HEK293 (cell line): ENCODE measurements at regions of chr21 and their contacts with region 1.

Region 1: GRCh38 chr21:36854391-36854790 is 112.1 kb downstream of the HLCS start:
- H3K4me3 ChIP-seq: no peak overlapping the region
- H3K27ac ChIP-seq: no peak overlapping the region
- H3K4me1 ChIP-seq: no peaks in the 10 kb centered on the region; the same call in 1 of the 2 replicates
- CTCF ChIP-seq: no peak; the same call in none of the 2 replicates

Region 2: DNA sequence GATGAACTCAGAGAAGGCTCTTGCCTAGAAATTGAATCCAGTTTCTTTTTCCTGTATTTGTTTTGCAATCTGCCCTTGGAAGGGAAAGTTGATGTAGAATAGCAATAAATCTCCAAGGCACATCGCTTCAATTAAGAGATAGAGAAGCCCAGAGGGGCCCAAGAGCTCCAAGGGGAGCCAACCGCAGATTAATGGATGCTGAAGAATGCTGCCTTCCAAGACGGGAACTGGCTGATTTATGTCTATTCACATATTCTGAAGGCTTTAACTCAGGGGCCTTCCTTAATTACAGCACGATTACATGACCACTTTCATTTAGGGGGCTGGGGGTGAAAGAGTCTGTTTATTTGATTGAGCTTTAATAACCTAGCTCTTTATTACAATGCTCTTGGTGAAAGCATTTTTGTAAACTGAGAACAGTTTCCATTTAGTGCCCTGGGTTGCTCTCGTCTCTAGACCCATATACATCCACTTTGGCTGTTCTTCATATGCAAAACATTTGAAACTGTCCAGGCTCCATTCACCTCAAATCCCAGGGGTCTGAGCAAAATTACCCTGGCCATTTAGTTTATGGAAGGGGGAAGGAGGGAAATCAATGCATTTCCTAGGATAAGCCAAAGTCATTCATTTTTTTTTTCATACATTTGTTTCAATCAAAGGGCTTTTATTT is 287.0 kb before region 1 on chr21:
- CTCF ChIA-PET with region 1: no interaction called
- POLR2A ChIA-PET with region 1: no interaction called
- H3K4me3 ChIP-seq: no peak overlapping the region
- H3K27ac ChIP-seq: peak overlapping the region; percentile 89
- H3K4me1 ChIP-seq: peaks cover 28% of the 10 kb centered on the region
- CTCF ChIP-seq: no peak

Region 3: DNA sequence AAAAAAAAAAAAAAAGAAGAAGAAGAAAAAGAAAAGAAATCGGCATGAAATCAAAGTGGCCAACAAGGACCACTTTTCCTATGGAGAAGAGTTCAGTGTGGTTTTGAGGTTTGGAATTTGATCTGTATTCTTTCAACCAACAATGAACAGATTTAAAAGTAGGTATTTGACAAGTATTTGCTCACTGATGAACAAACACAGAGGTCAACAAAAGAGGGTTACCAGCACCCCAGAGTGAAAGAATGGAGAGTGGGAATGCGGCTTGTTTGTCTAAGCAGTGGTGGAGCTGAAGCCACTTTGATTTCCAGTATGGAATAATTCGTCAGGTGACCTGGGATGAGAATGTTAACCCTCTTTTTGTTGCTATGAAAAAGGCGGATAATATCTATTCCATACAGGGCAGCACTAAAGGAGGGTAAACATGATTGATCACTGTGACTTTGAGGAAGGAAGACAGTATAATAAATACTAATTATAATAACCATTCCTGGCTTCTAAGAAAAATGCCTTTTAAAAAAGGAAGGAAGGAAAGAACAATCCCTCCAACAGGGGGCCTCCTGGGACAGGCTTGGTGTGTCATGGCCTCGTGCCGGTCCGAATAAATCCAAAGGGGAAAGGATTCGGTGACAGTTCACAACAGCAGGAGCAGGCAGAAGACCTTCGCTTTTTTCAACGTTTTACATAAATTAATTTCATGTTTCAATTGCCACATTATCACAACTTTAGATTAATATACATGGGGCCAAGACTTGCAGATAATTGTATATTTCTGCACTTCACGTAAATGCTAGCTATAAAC is 192.7 kb before region 1 on chr21:
- CTCF ChIA-PET with region 1: interaction called, 12 read pairs
- POLR2A ChIA-PET with region 1: no interaction called
- H3K4me3 ChIP-seq: no peak overlapping the region
- H3K27ac ChIP-seq: no peak overlapping the region
- H3K4me1 ChIP-seq: no peaks in the 10 kb centered on the region
- CTCF ChIP-seq: peak; percentile 30; the same call in 1 of the 2 replicates

Region 4: DNA sequence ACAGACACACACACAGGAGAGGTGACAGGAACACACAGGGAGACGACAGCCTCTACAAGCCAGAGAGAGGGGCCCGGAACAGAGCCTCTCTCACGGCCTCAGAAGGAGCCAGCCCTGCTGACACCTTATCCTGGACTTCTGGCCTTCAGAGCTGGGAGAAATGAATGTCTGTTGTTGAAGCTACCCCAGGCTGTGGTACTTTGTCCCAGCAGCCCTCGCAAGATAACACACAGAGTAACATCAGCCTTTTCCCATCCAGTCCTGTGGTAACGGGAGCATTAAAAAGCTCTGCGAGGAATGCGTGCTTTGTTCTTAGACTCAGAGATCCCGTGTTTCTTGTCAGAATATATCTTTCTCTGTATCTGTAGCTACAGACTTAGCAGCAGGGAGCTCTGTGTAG is 24.3 kb before region 1 on chr21:
- CTCF ChIA-PET with region 1: interaction called, 10 read pairs
- POLR2A ChIA-PET with region 1: no interaction called
- H3K4me3 ChIP-seq: no peak overlapping the region
- H3K27ac ChIP-seq: no peak overlapping the region
- H3K4me1 ChIP-seq: peaks cover 12% of the 10 kb centered on the region
- CTCF ChIP-seq: no peak

Region 5: GRCh38 chr21:36889401-36889800 is 35.0 kb after region 1 on chr21:
- CTCF ChIA-PET with region 1: no interaction called
- POLR2A ChIA-PET with region 1: no interaction called
- H3K4me3 ChIP-seq: no peak overlapping the region
- H3K27ac ChIP-seq: no peak overlapping the region
- H3K4me1 ChIP-seq: peaks cover 10% of the 10 kb centered on the region; the same call in 1 of the 2 replicates
- CTCF ChIP-seq: no peak

Region 6: GRCh38 chr21:36917471-36918158 is 63.2 kb after region 1 on chr21:
- CTCF ChIA-PET with region 1: interaction called, 17 read pairs
- POLR2A ChIA-PET with region 1: interaction called, 4 read pairs
- H3K4me3 ChIP-seq: no peak overlapping the region
- H3K27ac ChIP-seq: no peak overlapping the region; the same call in 1 of the 2 replicates
- H3K4me1 ChIP-seq: peaks cover 25% of the 10 kb centered on the region
- CTCF ChIP-seq: peak; percentile 76

Region 7: GRCh38 chr21:36927719-36928117 is 73.3 kb after region 1 on chr21:
- CTCF ChIA-PET with region 1: interaction called, 10 read pairs
- POLR2A ChIA-PET with region 1: no interaction called
- H3K4me3 ChIP-seq: no peak overlapping the region
- H3K27ac ChIP-seq: no peak overlapping the region
- H3K4me1 ChIP-seq: peaks cover 5% of the 10 kb centered on the region
- CTCF ChIP-seq: peak; percentile 82